ENCODE measurements at regions of chr7 and their contacts with region 1.

Region 1: GRCh38 chr7:4797858-4798705 is 22.7 kb downstream of the AP5Z1 start:
- DNase-seq: peak; percentile 18
- ATAC-seq: peak; percentile 90
- H3K4me3 ChIP-seq: no peak overlapping the region
- H3K27ac ChIP-seq: no peak overlapping the region
- H3K4me1 ChIP-seq: no peaks in the 10 kb centered on the region
- H3K27me3 ChIP-seq: no peaks in the 10 kb centered on the region
- CTCF ChIP-seq: peak; percentile 91
- POLR2A ChIP-seq: no peak
- RAD21 ChIP-seq: peak; percentile 72

Region 2: DNA sequence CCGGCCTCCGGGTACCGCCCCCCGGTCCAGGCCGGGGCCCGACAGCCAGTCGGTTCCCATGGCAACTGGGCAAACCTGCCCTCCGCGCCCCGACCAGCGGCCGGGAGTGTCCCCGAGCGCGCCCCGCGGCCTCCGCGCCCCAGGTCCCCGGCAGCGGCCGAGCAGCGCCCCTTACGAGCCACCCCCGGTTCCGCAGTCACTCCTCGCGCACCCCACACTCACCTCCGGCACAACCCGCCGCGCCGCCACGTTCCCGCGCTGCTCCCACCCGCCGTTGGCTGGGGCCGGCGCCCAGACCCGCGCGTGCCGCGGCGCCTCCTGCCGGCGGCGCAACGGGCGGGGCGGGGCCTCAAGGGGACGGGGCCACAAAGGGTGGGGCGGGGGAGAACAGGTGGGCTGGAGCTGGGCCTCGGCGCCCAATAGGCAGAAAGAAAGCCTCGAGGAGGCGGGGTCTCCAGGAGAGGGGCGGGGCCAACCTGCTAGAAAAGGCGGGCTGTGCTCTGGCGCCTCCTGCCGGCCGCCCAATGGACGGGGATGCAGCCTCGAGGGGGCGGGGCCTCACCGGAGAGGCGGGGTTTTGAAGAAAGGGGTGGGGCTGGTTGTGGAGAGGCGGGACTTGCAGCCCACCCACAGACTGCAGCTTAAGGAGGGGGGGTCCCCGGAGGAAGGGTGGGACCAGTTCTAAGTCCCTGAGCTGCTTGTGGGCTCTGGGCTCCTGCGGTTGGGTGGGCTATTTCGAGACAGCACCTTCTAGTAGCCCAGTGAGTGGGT is 85.5 kb after region 1 on chr7 and contains the start of gene RADIL:
- CTCF ChIA-PET with region 1: no interaction called
- POLR2A ChIA-PET with region 1: no interaction called
- dilution Hi-C with region 1: no loop called
- in situ Hi-C with region 1: no loop called
- intact Hi-C with region 1: loop called (anchors 1 kb)
- DNase-seq: peak; percentile 74
- ATAC-seq: peak; percentile 93
- H3K4me3 ChIP-seq: peak within 1 kb of the TSS; percentile 53
- H3K27ac ChIP-seq: no peak within 1 kb of the TSS
- H3K4me1 ChIP-seq: peaks cover 2% of the 10 kb centered on the region; the same call in 1 of the 2 replicates
- H3K27me3 ChIP-seq: peaks cover 2% of the 10 kb centered on the region
- CTCF ChIP-seq: peak; percentile 63
- POLR2A ChIP-seq: no peak
- RAD21 ChIP-seq: peak; percentile 37
- total RNA-seq, gene RADIL: 0.18 TPM in 1 of 2 replicates, not detected in the other

Region 3: DNA sequence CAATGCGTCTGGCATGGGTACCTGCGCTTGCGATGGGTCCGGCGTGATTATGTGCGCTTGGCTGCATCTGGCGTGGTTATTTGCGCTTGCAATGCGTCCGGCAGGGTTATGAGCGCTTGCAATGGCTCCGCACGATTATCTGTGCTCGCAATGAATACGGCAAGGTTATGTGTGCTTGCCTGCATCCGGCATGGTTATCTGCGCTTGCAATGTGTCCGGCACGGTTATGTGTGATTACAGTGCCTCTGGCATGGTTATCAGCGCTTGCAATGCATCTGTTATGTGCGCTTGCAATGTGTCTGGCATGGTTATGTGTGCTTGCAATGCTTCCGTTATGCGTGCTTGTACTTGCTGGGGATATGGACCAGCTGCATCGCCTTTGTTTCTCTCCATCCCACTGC is 285.2 kb after region 1 on chr7:
- CTCF ChIA-PET with region 1: interaction called, 3 read pairs
- POLR2A ChIA-PET with region 1: no interaction called
- dilution Hi-C with region 1: no loop called
- in situ Hi-C with region 1: loop called (anchors 5 kb)
- intact Hi-C with region 1: loop called (anchors 1 kb)
- DNase-seq: no peak
- ATAC-seq: no peak
- H3K4me3 ChIP-seq: no peak overlapping the region
- H3K27ac ChIP-seq: no peak overlapping the region
- H3K4me1 ChIP-seq: no peaks in the 10 kb centered on the region
- H3K27me3 ChIP-seq: peaks cover 7% of the 10 kb centered on the region; the same call in 1 of the 2 replicates
- CTCF ChIP-seq: no peak
- POLR2A ChIP-seq: no peak
- RAD21 ChIP-seq: no peak

Region 4: GRCh38 chr7:5088906-5089305 is 290.8 kb after region 1 on chr7:
- CTCF ChIA-PET with region 1: interaction called, 3 read pairs
- POLR2A ChIA-PET with region 1: no interaction called
- dilution Hi-C with region 1: no loop called
- in situ Hi-C with region 1: loop called (anchors 5 kb)
- intact Hi-C with region 1: loop called (anchors 1 kb)
- DNase-seq: no peak
- ATAC-seq: no peak
- H3K4me3 ChIP-seq: no peak overlapping the region
- H3K27ac ChIP-seq: no peak overlapping the region
- H3K4me1 ChIP-seq: no peaks in the 10 kb centered on the region
- H3K27me3 ChIP-seq: peaks cover 4% of the 10 kb centered on the region; the same call in 1 of the 2 replicates
- CTCF ChIP-seq: no peak
- POLR2A ChIP-seq: no peak
- RAD21 ChIP-seq: no peak

Region 5: DNA sequence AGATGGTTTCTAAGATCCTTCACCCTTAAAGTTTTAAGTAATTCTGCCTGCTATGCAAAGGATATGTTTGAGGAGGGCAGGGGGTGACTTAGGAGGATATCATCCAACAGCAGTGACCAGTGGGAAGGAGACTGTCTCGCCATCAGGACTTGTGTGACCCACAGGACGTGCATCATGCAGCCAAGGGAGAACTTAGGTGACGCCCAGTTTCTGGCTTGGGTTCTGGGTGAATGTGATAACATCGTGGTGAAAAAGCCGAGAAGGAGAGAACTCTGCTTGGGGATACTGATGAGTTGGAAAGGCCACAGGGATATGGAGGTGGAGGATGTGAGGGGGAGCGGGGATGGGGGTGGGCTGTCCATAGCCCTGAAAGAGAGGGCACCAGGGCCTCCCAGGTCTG is 395.8 kb after region 1 on chr7:
- CTCF ChIA-PET with region 1: no interaction called
- POLR2A ChIA-PET with region 1: no interaction called
- dilution Hi-C with region 1: no loop called
- in situ Hi-C with region 1: no loop called
- intact Hi-C with region 1: loop called (anchors 5 kb)
- DNase-seq: no peak
- ATAC-seq: no peak
- H3K4me3 ChIP-seq: no peak overlapping the region
- H3K27ac ChIP-seq: no peak overlapping the region
- H3K4me1 ChIP-seq: peaks cover 14% of the 10 kb centered on the region
- H3K27me3 ChIP-seq: no peaks in the 10 kb centered on the region
- CTCF ChIP-seq: no peak
- POLR2A ChIP-seq: no peak
- RAD21 ChIP-seq: no peak

Measured in IMR-90 (cell line).